ENCODE measurements at regions of chr6 and their contacts with region 1.

Region 1: GRCh38 chr6:32838114-32838958 is at the start of gene TAP2:
- DNase-seq: peak; percentile 63
- ATAC-seq: peak; percentile 96
- H3K4me3 ChIP-seq: peak within 1 kb of the TSS; percentile 65 to 76
- H3K27ac ChIP-seq: peak within 1 kb of the TSS; percentile 89
- H3K4me1 ChIP-seq: peaks cover 9% of the 10 kb centered on the region
- H3K27me3 ChIP-seq: no peaks in the 10 kb centered on the region
- CTCF ChIP-seq: peak; percentile 98
- total RNA-seq, gene TAP2: 93.6 TPM

Region 2: GRCh38 chr6:32459549-32460424 is 378.5 kb before region 1 on chr6:
- CTCF ChIA-PET with region 1: no interaction called
- POLR2A ChIA-PET with region 1: interaction called, 10 read pairs
- in situ Hi-C with region 1: no loop called
- intact Hi-C with region 1: no loop called
- DNase-seq: no peak
- ATAC-seq: no peak
- H3K4me3 ChIP-seq: no peak overlapping the region
- H3K27ac ChIP-seq: no peak overlapping the region
- H3K4me1 ChIP-seq: no peaks in the 10 kb centered on the region
- H3K27me3 ChIP-seq: peaks cover 15% of the 10 kb centered on the region
- CTCF ChIP-seq: no peak

Region 3: DNA sequence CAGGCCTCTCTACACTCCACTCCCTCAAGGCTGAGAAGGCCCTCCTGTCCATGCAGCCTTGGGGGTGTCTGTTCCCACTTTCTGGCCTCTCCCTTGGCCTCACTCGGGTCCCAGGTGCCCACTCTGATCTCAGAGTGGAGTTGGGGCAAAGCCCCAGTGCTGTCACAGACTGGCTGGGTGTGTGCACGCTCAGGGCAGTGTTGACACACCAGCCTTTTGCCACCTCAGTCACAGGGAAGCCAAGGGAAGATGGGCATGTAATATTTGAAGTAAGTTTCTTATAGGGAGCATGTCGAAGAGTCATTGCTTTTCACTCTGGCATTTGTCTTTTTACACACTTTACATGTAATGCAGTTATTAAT is 353.7 kb before region 1 on chr6:
- CTCF ChIA-PET with region 1: no interaction called
- POLR2A ChIA-PET with region 1: interaction called, 11 read pairs
- in situ Hi-C with region 1: no loop called
- intact Hi-C with region 1: no loop called
- DNase-seq: no peak
- ATAC-seq: no peak
- H3K4me3 ChIP-seq: no peak overlapping the region
- H3K27ac ChIP-seq: no peak overlapping the region
- H3K4me1 ChIP-seq: no peaks in the 10 kb centered on the region
- H3K27me3 ChIP-seq: peaks cover 8% of the 10 kb centered on the region
- CTCF ChIP-seq: no peak

Region 4: DNA sequence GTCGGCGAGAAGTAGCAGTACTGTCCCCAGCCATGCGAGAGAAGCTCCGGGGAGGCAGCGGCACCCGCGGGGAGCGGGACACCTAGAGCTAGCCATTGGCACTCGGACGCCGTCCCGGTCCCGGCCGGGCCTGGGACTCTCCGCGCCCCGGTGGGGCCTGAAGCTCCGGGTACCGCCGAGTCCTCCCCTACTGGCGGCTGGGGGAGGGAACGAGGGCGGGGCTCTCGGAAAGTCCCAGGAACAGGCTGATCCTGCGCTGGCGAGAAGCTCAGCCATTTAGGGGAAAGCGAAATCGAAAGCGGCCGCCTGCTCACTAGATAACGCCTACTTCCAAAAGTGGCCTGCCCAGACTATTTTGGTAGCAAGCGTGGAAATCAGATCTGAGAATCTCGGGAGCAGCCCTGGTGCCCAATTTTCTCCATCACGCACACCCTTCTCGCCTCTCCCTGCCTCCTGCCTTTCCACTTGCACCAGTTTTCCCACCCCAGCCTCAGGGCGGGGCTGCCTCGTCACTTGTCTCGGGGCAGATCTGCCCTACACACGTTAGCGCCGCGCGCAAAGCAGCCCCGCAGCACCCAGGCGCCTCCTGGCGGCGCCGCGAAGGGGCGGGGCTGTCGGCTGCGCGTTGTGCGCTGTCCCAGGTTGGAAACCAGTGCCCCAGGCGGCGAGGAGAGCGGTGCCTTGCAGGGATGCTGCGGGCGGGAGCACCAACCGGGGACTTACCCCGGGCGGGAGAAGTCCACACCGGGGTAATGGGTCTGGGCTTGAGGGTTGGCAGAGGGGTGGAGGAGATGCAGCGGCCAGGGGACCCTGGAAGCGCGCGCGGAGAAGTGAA is 15.4 kb after region 1 on chr6 and contains the starts of genes PSMB9 and TAP1:
- CTCF ChIA-PET with region 1: interaction called, 47 read pairs
- POLR2A ChIA-PET with region 1: interaction called, 4 read pairs
- in situ Hi-C with region 1: no loop called
- intact Hi-C with region 1: no loop called
- DNase-seq: peak; percentile 90
- ATAC-seq: peak; percentile 96
- H3K4me3 ChIP-seq: peak within 1 kb of the TSS; percentile 77 to 79
- H3K27ac ChIP-seq: peak within 1 kb of the TSS; percentile 92
- H3K4me1 ChIP-seq: peaks cover 9% of the 10 kb centered on the region
- H3K27me3 ChIP-seq: no peaks in the 10 kb centered on the region
- CTCF ChIP-seq: peak; percentile 94
- total RNA-seq, gene PSMB9: 41.5 TPM
- total RNA-seq, gene TAP1: 74.7 TPM

Region 5: GRCh38 chr6:32868257-32868788 is 30.0 kb after region 1 on chr6:
- CTCF ChIA-PET with region 1: interaction called, 56 read pairs
- POLR2A ChIA-PET with region 1: no interaction called
- in situ Hi-C with region 1: no loop called
- intact Hi-C with region 1: loop called (anchors 1 kb)
- DNase-seq: peak; percentile 57
- ATAC-seq: peak; percentile 94
- H3K4me3 ChIP-seq: no peak overlapping the region
- H3K27ac ChIP-seq: no peak overlapping the region
- H3K4me1 ChIP-seq: 0 out of 2 replicates have a peak, but pooled peaks cover 3% of the 10 kb centered on the region
- H3K27me3 ChIP-seq: peaks cover 10% of the 10 kb centered on the region; the same call in 1 of the 2 replicates
- CTCF ChIP-seq: peak; percentile 81; the same call in 1 of the 2 replicates

Region 6: GRCh38 chr6:33183071-33183683 is 344.8 kb after region 1 on chr6:
- CTCF ChIA-PET with region 1: no interaction called
- POLR2A ChIA-PET with region 1: no interaction called
- in situ Hi-C with region 1: no loop called
- intact Hi-C with region 1: no loop called
- DNase-seq: no peak
- ATAC-seq: no peak
- H3K4me3 ChIP-seq: no peak overlapping the region
- H3K27ac ChIP-seq: no peak overlapping the region
- H3K4me1 ChIP-seq: no peaks in the 10 kb centered on the region
- H3K27me3 ChIP-seq: no peaks in the 10 kb centered on the region
- CTCF ChIP-seq: no peak

Region 7: GRCh38 chr6:33375143-33375671 is 536.9 kb after region 1 on chr6:
- CTCF ChIA-PET with region 1: no interaction called
- POLR2A ChIA-PET with region 1: no interaction called
- in situ Hi-C with region 1: no loop called
- intact Hi-C with region 1: no loop called
- DNase-seq: no peak
- ATAC-seq: no peak; the same call in 1 of the 2 replicates
- H3K4me3 ChIP-seq: no peak overlapping the region
- H3K27ac ChIP-seq: no peak overlapping the region
- H3K4me1 ChIP-seq: no peaks in the 10 kb centered on the region
- H3K27me3 ChIP-seq: no peaks in the 10 kb centered on the region
- CTCF ChIP-seq: no peak

Region 8: GRCh38 chr6:33446339-33446738 is 608.0 kb after region 1 on chr6:
- CTCF ChIA-PET with region 1: interaction called, 16 read pairs
- POLR2A ChIA-PET with region 1: no interaction called
- in situ Hi-C with region 1: no loop called
- intact Hi-C with region 1: no loop called
- DNase-seq: no peak
- ATAC-seq: no peak
- H3K4me3 ChIP-seq: no peak overlapping the region
- H3K27ac ChIP-seq: no peak overlapping the region
- H3K4me1 ChIP-seq: no peaks in the 10 kb centered on the region
- H3K27me3 ChIP-seq: no peaks in the 10 kb centered on the region
- CTCF ChIP-seq: no peak

Region 9: GRCh38 chr6:33744001-33744848 is 905.9 kb after region 1 on chr6:
- CTCF ChIA-PET with region 1: interaction called, 10 read pairs
- POLR2A ChIA-PET with region 1: no interaction called
- in situ Hi-C with region 1: no loop called
- intact Hi-C with region 1: no loop called
- DNase-seq: peak; percentile 58
- ATAC-seq: peak; percentile 84
- H3K4me3 ChIP-seq: no peak overlapping the region
- H3K27ac ChIP-seq: no peak overlapping the region
- H3K4me1 ChIP-seq: peaks cover 9% of the 10 kb centered on the region
- H3K27me3 ChIP-seq: no peaks in the 10 kb centered on the region
- CTCF ChIP-seq: peak; percentile 95